CD4-positive, alpha-beta memory T cell (primary cell): ENCODE measurements at regions of chr19 and their contacts with region 1.

Region 1: GRCh38 chr19:35247526-35248306 is 1.1 kb upstream of the LSR start:
- DNase-seq: peak in 4 of 5 donors; percentile 48 to 53 (median 51)
- H3K4me3 ChIP-seq: peak overlapping the region; percentile 94
- H3K4me3 Mint-ChIP-seq: peak overlapping the region; percentile 91 to 94 (median 93)
- H3K27ac ChIP-seq: peak overlapping the region; percentile 61
- H3K27ac Mint-ChIP-seq: peak overlapping the region; percentile 88 to 97 (median 91)
- H3K4me1 ChIP-seq: peaks cover 24% of the 10 kb centered on the region
- H3K4me1 Mint-ChIP-seq: peaks cover 18 to 52% (median 32%) of the 10 kb centered on the region in 4 donors
- H3K27me3 ChIP-seq: no peaks in the 10 kb centered on the region
- H3K27me3 Mint-ChIP-seq: no peaks in the 10 kb centered on the region

Region 2: DNA sequence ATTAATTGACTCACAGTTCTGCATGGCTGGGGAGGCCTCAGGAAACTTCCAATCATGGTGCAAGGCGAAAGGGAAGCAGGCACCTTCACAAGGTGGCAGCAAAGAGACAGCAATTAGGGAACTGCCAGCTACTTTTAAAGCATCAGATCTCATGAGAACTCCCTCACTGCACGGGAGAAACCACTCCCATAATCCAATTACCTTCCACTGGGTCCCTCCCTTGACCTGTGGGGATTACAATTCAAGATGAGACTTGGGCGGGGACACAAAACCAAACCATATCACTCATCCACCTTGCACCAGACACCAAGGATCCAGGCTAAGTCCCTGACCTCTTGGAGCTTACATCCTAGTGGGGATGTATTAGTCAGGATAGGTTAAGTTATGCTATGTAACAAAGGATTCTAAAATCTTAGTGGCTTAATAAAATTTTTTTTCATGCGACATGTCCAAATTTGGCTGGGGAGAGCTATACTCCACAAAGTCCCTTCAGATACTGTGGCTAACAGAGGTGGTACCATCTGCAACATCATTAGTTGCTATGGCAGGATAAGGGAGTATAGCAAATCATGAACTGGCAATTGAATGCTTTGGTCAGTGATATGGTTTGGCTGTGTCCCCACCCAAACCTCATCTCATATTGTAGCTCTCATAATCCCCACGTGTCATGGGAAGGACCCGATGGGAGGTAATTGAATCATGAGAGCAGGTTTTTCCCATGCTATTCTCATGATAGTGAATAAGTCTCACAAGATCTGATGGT is 10.9 kb before region 1 on chr19:
- CTCF ChIA-PET with region 1: interaction called, 4 read pairs
- POLR2A ChIA-PET with region 1: interaction called, 5 read pairs
- intact Hi-C with region 1: loop called (anchors 1 kb)
- DNase-seq: peak in 3 of 5 donors; percentile 34 to 38 (median 36)
- H3K4me3 ChIP-seq: no peak overlapping the region
- H3K4me3 Mint-ChIP-seq: no peak overlapping the region
- H3K27ac ChIP-seq: no peak overlapping the region
- H3K27ac Mint-ChIP-seq: peak overlapping the region in 5 of 7 donors; percentile 30 to 93 (median 59)
- H3K4me1 ChIP-seq: peaks cover 34% of the 10 kb centered on the region
- H3K4me1 Mint-ChIP-seq: peaks cover 20 to 42% (median 37%) of the 10 kb centered on the region in 4 donors
- H3K27me3 ChIP-seq: no peaks in the 10 kb centered on the region
- H3K27me3 Mint-ChIP-seq: no peaks in the 10 kb centered on the region

Region 3: DNA sequence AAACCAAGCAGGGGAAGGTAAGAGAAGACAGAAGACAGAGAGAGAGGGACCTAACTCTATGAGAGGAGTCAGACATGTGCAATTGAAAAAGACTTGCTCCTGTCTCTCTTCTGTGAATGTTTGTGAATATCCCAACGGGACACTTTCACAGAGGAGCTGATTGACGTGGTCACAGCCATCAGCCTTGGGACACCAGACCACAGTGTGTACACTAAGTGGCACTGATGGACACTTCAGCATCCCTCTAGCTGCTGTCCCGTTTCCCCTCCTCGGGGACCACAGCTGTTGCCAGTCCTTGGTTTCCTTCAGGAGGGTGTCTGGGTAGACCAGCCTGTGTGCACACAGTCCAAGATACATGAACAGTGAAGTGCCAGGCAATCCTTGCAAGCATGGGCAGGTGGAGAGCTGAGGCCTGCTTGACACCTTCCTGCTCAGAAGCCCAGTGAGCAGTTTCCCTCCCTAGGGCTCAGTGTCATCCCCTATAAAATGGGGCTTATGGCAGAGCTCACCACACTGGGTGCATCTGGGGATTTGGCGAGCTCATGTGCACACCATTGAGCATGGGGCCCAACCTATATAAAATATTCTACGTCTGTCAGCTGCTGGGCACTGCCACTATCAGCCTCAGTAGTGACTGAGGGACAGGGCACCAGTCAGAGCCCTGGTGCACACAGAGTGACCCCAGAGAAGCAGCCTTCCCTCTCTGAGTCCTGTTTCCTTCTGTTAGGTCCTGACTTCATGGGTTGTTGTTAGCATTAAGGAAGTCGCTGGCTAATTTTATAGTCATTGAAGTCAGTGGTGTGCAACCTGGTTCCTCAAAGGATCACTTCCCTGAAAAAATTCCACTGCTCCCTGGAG is 16.8 kb after region 1 on chr19:
- CTCF ChIA-PET with region 1: no interaction called
- POLR2A ChIA-PET with region 1: interaction called, 48 read pairs
- intact Hi-C with region 1: loop called (anchors 1 kb)
- DNase-seq: no peak
- H3K4me3 ChIP-seq: no peak overlapping the region
- H3K4me3 Mint-ChIP-seq: peak overlapping the region in 2 of 8 donors; percentile 35 to 46
- H3K27ac ChIP-seq: no peak overlapping the region
- H3K27ac Mint-ChIP-seq: peak overlapping the region in 6 of 7 donors; percentile 32 to 90 (median 82)
- H3K4me1 ChIP-seq: peaks cover 18% of the 10 kb centered on the region
- H3K4me1 Mint-ChIP-seq: peaks cover 9 to 27% (median 19%) of the 10 kb centered on the region in 4 donors
- H3K27me3 ChIP-seq: no peaks in the 10 kb centered on the region
- H3K27me3 Mint-ChIP-seq: no peaks in the 10 kb centered on the region

Region 4: DNA sequence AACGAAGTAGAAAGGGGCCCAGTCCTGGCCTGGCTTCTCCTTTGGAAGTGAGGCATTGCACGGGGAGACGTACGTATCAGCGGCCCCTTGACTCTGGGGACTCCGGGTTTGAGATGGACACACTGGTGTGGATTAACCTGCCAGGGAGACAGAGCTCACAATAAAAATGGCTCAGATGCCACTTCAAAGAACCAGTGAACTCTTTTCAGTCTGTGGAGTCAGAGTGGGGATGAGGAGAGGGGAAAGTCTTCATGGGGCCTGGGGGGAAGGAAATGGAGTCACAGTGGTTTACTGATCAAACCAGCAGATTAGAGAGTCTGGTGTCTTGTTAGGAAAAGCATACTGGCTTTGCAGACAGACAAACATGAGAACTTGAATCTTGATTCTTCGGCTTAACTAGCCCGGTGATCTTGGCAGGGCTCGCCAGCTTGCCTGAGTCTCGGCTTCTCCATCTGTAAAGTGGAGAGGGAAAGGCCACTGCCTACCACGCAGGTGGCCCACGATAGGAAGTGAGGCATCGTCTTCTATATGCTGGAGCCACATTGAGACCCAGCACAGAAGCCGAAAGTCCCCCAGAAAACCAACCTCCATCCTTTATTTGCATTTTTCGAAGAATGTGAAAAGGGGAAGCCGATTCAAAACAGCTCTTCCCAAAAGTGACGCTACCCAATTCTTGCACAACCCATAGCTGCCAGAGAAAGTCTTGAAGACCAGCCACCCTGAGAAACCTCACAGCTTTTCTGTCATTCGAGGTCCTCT is 99.6 kb after region 1 on chr19 and contains the start of gene FFAR1:
- CTCF ChIA-PET with region 1: no interaction called
- POLR2A ChIA-PET with region 1: no interaction called
- intact Hi-C with region 1: loop called (anchors 5 kb)
- DNase-seq: peak; percentile 62 to 85 (median 64)
- H3K4me3 ChIP-seq: peak within 1 kb of the TSS in 1 of 2 donors; percentile 0
- H3K4me3 Mint-ChIP-seq: peak within 1 kb of the TSS; percentile 67 to 87 (median 76)
- H3K27ac ChIP-seq: peak within 1 kb of the TSS; percentile 8
- H3K27ac Mint-ChIP-seq: peak within 1 kb of the TSS; percentile 53 to 95 (median 91)
- H3K4me1 ChIP-seq: peaks cover 28% of the 10 kb centered on the region
- H3K4me1 Mint-ChIP-seq: peaks cover 22 to 32% (median 27%) of the 10 kb centered on the region in 4 donors
- H3K27me3 ChIP-seq: no peaks in the 10 kb centered on the region
- H3K27me3 Mint-ChIP-seq: peaks cover 2 to 5% of the 10 kb centered on the region in 2 donors
- total RNA-seq, gene FFAR1: not detected

Region 5: DNA sequence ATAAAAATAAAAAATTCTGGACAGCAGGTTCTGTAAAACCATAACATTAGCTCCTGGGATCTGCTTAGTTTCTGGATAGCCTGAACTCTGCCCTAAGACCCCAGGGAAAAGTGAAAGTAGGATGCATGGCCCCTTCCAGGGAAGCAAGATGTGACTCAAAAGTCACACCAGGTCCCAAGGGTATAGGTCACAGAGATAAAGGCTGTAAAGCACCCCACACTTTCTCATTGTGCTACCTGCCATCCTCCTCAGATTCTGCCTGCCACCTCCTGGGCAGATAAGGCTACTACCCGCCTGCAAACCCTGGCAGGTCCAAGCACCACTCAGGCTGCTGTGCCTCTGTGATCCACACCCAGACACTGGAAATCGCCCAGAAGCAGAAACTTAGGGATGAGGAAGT is 220.9 kb after region 1 on chr19:
- CTCF ChIA-PET with region 1: no interaction called
- POLR2A ChIA-PET with region 1: no interaction called
- intact Hi-C with region 1: loop called (anchors 2 kb)
- DNase-seq: peak; percentile 64 to 73 (median 71)
- H3K4me3 ChIP-seq: no peak overlapping the region
- H3K4me3 Mint-ChIP-seq: no peak overlapping the region
- H3K27ac ChIP-seq: no peak overlapping the region
- H3K27ac Mint-ChIP-seq: peak overlapping the region in 1 of 7 donors; percentile 47
- H3K4me1 ChIP-seq: peaks cover 12% of the 10 kb centered on the region
- H3K4me1 Mint-ChIP-seq: peaks cover 7 to 17% (median 16%) of the 10 kb centered on the region in 4 donors
- H3K27me3 ChIP-seq: no peaks in the 10 kb centered on the region
- H3K27me3 Mint-ChIP-seq: peaks cover 0 to 1% of the 10 kb centered on the region in 2 donors

Region 6: DNA sequence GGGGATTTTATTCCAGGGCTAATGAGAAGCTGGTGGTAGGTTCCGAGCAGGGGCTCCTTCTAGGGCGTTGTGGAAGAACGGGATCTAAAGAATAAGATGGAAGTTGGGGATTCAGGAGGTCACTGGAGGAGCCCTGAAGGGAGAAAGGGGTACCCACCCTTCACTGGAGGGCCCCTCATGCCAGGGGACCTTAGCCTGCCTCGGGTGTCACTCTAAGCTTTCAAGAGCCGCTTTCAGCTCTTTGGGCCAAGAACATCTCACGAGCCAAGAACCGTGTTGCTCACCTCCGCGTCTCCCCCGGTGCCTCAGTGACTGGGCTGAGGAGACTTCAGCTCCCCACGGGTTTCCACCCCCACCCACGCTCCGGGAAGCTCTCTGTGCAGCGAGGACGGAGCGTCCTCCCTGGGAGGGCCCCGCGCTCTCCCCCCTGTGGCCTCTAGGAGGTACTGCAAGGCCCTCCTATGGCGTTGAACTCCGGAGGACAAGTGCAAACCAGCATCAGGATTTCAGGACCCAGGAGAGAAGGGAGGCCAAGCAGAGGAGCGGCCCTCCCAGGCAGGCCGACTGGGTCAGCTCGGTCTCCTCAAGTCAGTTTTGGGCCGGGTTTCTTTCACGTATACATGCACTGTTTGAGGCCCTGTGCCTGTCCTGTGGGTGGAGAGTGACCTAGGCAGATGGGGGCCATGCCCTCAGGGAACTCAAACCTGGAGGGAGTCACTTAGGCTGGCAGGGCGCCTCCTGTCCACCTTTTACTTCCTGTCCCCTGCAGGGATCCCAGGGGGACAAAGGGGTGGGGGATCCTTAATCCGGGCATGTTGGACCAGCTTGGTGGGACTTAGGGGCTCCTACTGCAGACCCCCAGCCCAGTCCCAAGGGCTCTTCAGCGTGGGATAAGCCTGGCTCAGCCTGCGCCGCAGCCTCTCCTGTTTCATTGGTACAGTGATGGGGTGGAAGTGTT is 247.7 kb after region 1 on chr19:
- CTCF ChIA-PET with region 1: no interaction called
- POLR2A ChIA-PET with region 1: no interaction called
- intact Hi-C with region 1: loop called (anchors 1 kb)
- DNase-seq: peak; percentile 59 to 70 (median 63)
- H3K4me3 ChIP-seq: no peak overlapping the region
- H3K4me3 Mint-ChIP-seq: peak overlapping the region in 3 of 8 donors; percentile 38 to 51 (median 39)
- H3K27ac ChIP-seq: no peak overlapping the region
- H3K27ac Mint-ChIP-seq: peak overlapping the region in 3 of 7 donors; percentile 30 to 48 (median 36)
- H3K4me1 ChIP-seq: peaks cover 7% of the 10 kb centered on the region
- H3K4me1 Mint-ChIP-seq: peaks cover 0 to 9% (median 6%) of the 10 kb centered on the region in 4 donors
- H3K27me3 ChIP-seq: no peaks in the 10 kb centered on the region
- H3K27me3 Mint-ChIP-seq: peaks cover 9 to 15% of the 10 kb centered on the region in 2 donors